ENCODE measurements at regions of chr18 and their contacts with region 1.

Region 1: GRCh38 chr18:11518788-11519685 is 90.4 kb upstream of the SLC35G4 start:
- DNase-seq: peak; percentile 68
- ATAC-seq: peak; percentile 71
- H3K4me3 Mint-ChIP-seq: no peak overlapping the region
- H3K27ac Mint-ChIP-seq: no peak overlapping the region
- H3K4me1 Mint-ChIP-seq: no peaks in the 10 kb centered on the region
- H3K27me3 Mint-ChIP-seq: peaks cover 5% of the 10 kb centered on the region

Region 2: GRCh38 chr18:11411048-11411447 is 108.0 kb before region 1 on chr18:
- CTCF ChIA-PET with region 1: no interaction called
- DNase-seq: no peak
- ATAC-seq: no peak
- H3K4me3 Mint-ChIP-seq: no peak overlapping the region
- H3K27ac Mint-ChIP-seq: no peak overlapping the region
- H3K4me1 Mint-ChIP-seq: no peaks in the 10 kb centered on the region
- H3K27me3 Mint-ChIP-seq: no peaks in the 10 kb centered on the region

Region 3: DNA sequence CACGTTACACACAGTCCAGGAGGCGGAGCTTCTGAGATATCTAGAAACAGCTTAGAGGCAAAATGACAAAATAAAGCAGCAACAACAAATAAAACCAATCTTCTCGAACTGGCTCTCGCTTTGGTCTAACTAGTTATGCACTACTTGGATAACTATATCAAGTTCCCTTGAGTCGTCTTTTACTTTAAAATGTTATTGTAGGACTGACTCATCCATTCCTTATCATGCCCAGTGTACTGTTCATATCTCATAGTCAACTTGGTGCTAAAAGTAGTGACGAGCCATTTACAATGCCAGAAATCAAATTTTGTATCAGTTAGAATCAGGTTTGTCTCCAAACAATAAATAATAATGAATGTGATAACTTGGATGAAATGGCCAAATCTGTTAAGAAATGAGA is 12.2 kb before region 1 on chr18:
- CTCF ChIA-PET with region 1: interaction called, 14 read pairs
- DNase-seq: no peak
- ATAC-seq: no peak
- H3K4me3 Mint-ChIP-seq: no peak overlapping the region
- H3K27ac Mint-ChIP-seq: no peak overlapping the region
- H3K4me1 Mint-ChIP-seq: peaks cover 6% of the 10 kb centered on the region
- H3K27me3 Mint-ChIP-seq: peaks cover 5% of the 10 kb centered on the region

Region 4: DNA sequence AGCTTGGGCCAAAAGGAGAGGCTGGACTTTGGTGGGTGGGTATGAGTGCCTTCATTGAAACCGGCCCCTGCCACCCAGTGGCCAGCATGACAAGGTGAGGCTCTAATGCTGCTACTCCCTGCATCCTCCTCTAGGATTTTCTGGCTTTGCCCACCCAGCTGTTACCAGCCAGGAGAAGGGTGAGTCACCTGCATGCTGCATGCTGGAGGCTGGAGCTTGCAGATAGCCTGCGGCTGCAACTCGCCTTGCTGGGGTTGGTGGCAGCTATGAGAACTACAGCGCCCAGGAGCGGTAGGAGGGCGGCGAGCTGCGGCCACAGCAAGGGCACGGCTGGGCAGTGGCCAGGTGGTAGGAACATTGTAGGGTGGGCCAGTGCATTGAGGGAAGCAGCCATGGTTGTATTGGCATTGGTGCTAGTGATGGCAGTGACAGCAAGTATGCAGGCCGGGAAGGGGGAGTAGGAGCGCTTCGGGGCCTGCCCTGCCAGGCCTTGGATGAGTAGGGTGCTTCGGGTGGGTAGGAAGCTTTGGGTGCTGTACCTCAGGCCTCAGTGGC is 15.0 kb after region 1 on chr18:
- CTCF ChIA-PET with region 1: no interaction called
- DNase-seq: no peak
- ATAC-seq: no peak
- H3K4me3 Mint-ChIP-seq: no peak overlapping the region
- H3K27ac Mint-ChIP-seq: no peak overlapping the region
- H3K4me1 Mint-ChIP-seq: no peaks in the 10 kb centered on the region
- H3K27me3 Mint-ChIP-seq: peaks cover 5% of the 10 kb centered on the region

Region 5: GRCh38 chr18:11553098-11553940 is 34.3 kb after region 1 on chr18:
- CTCF ChIA-PET with region 1: interaction called, 10 read pairs
- DNase-seq: no peak
- ATAC-seq: peak; percentile 45
- H3K4me3 Mint-ChIP-seq: no peak overlapping the region
- H3K27ac Mint-ChIP-seq: no peak overlapping the region
- H3K4me1 Mint-ChIP-seq: peaks cover 5% of the 10 kb centered on the region
- H3K27me3 Mint-ChIP-seq: peaks cover 15% of the 10 kb centered on the region

Region 6: GRCh38 chr18:11719621-11720020 is 200.6 kb after region 1 on chr18:
- CTCF ChIA-PET with region 1: no interaction called
- DNase-seq: no peak
- ATAC-seq: no peak
- H3K4me3 Mint-ChIP-seq: no peak overlapping the region
- H3K27ac Mint-ChIP-seq: no peak overlapping the region
- H3K4me1 Mint-ChIP-seq: no peaks in the 10 kb centered on the region
- H3K27me3 Mint-ChIP-seq: peaks cover 8% of the 10 kb centered on the region